Motor neuron (in vitro differentiated cells): ENCODE measurements at regions of chr3 and their contacts with region 1.

Region 1: GRCh38 chr3:111577794-111578685 is 17.1 kb downstream of the ZBED2 start:
- ATAC-seq: peak in 6 of 8 experiments; percentile 53 to 98 (median 78)
- H3K4me3 ChIP-seq: no peak overlapping the region
- H3K27ac ChIP-seq: no peak overlapping the region
- H3K4me1 ChIP-seq: no peaks in the 10 kb centered on the region

Region 2: GRCh38 chr3:111691293-111691909 is 113.4 kb after region 1 on chr3:
- in situ Hi-C with region 1: loop called in 2 of 9 experiments (anchors 10 to 25 kb)
- ATAC-seq: peak in 6 of 8 experiments; percentile 39 to 78 (median 63)
- H3K4me3 ChIP-seq: no peak overlapping the region
- H3K27ac ChIP-seq: no peak overlapping the region
- H3K4me1 ChIP-seq: peaks cover 0 to 21% of the 10 kb centered on the region in 2 donors

Region 3: DNA sequence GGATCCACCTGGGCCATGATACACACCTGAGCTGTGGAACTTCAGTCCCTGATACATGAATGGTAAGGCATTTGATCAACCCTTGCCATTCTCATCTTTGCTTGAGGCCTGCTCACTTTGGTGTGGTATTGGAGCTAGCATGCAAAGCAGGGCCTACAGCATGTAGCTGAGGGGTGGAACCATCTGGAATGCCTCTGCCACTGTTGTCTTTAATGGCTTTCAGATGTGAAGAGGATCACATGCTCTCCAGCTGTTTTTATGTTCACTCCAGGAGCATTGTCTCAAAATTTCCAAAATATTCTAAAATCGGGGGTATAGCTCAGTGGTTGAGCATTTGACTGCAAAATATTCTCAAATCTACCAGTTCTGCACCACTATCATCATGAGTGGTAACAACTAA is 216.7 kb after region 1 on chr3:
- in situ Hi-C with region 1: no loop called
- ATAC-seq: peak in 3 of 8 experiments; percentile 65 to 99 (median 98)
- H3K4me3 ChIP-seq: no peak overlapping the region
- H3K27ac ChIP-seq: no peak overlapping the region
- H3K4me1 ChIP-seq: no peaks in the 10 kb centered on the region

Region 4: DNA sequence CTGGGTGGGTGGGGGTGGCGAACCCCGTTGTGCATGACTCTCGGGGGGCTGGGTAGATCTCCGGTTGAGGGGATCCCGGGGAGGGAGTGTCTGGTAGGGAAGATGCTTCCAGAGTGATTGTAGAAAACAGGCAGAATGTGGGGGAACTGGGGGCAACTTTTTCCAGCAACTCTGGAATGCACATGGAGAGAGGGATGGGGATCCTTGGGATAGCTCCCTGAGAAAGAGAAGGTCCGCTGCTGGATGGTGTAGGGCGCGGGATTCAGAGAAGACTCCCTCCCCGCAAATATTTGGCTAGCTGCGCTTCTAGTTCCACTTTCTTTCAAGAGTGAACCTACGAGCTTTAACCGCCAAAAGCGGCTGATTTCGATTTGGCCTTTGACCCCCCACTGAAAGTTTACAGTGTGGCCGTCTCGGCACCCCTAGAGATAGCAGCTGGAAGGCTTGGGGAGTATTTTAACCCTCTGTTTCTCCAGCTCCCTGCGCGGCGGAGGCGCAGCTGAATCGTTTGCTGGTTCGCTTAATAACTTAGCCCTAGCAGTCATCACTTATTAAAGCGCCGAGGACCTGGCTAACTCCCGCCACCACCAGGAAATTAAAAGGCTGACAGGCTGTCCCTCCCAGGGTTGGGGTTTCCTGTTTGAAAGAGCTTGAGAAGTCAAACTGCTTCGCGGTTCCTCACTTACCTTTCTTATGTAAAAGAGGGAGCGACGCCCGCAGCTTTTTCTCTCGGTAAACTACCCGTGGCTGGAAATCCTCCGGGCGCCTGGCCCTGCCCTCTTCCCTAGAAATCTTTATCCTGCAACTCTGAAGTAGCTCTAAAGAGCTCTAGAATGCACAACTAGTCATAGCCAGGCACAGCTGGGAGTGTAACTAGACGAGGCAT is 282.2 kb after region 1 on chr3:
- in situ Hi-C with region 1: loop called in 1 of 9 experiments (anchors 25 kb)
- ATAC-seq: peak; percentile 54 to 84 (median 63)
- H3K4me3 ChIP-seq: peak overlapping the region; percentile 55 to 90 (median 77)
- H3K27ac ChIP-seq: peak overlapping the region in 1 of 2 donors; percentile 31
- H3K4me1 ChIP-seq: peaks cover 0 to 16% of the 10 kb centered on the region in 2 donors